ENCODE measurements at regions of chr13 and their contacts with region 1.

Region 1: GRCh38 chr13:100434010-100434763 is 154.4 kb downstream of the GGACT start:
- DNase-seq: peak; percentile 16
- H3K4me3 Mint-ChIP-seq: peak overlapping the region; percentile 1
- H3K27ac Mint-ChIP-seq: peak overlapping the region; percentile 56
- H3K4me1 Mint-ChIP-seq: peaks cover 55% of the 10 kb centered on the region
- H3K27me3 Mint-ChIP-seq: no peaks in the 10 kb centered on the region

Region 2: GRCh38 chr13:100340865-100341264 is 93.3 kb before region 1 on chr13:
- intact Hi-C with region 1: loop called (anchors 5 kb)
- DNase-seq: no peak
- H3K4me3 Mint-ChIP-seq: no peak overlapping the region
- H3K27ac Mint-ChIP-seq: no peak overlapping the region
- H3K4me1 Mint-ChIP-seq: peaks cover 27% of the 10 kb centered on the region
- H3K27me3 Mint-ChIP-seq: peaks cover 2% of the 10 kb centered on the region

Region 3: DNA sequence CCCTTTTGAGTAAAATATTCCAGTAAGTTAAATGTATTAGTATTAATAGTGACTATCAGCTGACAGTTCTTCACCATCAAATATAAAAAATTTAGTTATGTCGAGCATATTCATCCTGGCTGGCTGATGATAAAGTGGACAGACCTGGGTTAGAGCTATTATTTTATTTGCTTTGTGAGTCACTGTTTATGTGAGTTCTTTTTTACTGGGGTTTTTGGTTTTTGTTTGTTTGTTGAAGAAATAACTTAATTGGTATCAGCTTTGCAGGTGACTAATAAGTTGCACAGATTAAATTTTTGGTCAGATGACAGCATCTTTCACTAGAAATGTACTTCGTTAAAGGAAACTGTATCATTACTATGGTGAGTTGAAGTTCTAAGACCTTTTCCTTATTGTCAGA is 70.3 kb before region 1 on chr13:
- intact Hi-C with region 1: loop called (anchors 5 kb)
- DNase-seq: no peak
- H3K4me3 Mint-ChIP-seq: no peak overlapping the region
- H3K27ac Mint-ChIP-seq: no peak overlapping the region
- H3K4me1 Mint-ChIP-seq: peaks cover 14% of the 10 kb centered on the region
- H3K27me3 Mint-ChIP-seq: no peaks in the 10 kb centered on the region

Region 4: DNA sequence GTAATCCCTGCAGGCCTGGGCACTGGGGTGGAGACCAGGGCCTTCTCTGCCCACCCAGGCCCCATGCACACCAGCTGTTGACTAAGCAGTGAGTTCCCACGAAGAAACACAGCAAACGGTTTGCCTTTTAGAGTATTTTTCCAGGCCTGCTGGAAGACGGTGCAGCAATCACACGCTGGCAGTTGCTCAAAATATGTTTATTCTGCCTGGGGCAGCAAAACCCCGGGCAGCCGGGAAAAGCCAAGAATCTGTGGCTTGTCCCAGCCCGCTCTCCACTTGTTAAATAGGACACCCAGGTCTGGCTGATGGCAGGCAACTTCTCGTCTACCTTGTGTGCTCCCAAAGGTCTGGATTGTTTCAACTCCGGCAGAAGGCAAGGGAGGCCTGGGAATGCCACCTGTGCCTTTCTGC is 113.6 kb after region 1 on chr13:
- intact Hi-C with region 1: no loop called
- DNase-seq: no peak
- H3K4me3 Mint-ChIP-seq: no peak overlapping the region
- H3K27ac Mint-ChIP-seq: no peak overlapping the region
- H3K4me1 Mint-ChIP-seq: peaks cover 2% of the 10 kb centered on the region
- H3K27me3 Mint-ChIP-seq: peaks cover 1% of the 10 kb centered on the region

Region 5: DNA sequence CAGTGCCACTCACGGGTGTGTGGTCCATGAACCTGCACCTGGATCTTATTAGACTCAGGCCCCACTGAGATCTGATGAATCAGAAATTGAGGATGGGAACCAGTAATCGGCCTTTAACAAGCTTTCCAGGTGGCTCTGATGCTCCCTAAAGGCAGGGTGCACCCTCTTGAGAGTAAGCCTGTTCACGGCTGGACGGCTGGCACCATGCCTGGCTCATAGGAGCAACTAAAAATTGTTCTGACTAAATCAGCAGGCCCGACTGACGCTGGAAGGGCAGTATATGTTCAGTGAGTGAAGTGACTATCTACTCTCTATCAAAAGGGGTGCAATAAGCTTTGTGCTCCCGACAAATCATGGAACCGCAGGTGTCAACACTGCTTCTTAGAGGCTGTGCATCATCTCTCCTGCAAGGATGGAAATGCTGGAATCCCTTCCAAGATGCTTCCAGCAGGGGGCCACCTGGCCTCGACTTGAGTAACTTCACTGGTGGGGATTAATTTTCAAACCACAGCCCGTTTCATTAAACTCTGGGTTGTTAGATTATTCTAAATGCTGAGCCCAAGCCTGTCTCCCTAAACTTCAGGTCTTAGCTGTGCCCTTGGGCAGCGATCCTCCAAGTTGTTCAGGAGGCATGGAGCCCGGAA is 212.0 kb after region 1 on chr13:
- intact Hi-C with region 1: no loop called
- DNase-seq: no peak
- H3K4me3 Mint-ChIP-seq: no peak overlapping the region
- H3K27ac Mint-ChIP-seq: no peak overlapping the region
- H3K4me1 Mint-ChIP-seq: no peaks in the 10 kb centered on the region
- H3K27me3 Mint-ChIP-seq: no peaks in the 10 kb centered on the region